ENCODE measurements at regions of chr7 and their contacts with region 1.

Region 1: DNA sequence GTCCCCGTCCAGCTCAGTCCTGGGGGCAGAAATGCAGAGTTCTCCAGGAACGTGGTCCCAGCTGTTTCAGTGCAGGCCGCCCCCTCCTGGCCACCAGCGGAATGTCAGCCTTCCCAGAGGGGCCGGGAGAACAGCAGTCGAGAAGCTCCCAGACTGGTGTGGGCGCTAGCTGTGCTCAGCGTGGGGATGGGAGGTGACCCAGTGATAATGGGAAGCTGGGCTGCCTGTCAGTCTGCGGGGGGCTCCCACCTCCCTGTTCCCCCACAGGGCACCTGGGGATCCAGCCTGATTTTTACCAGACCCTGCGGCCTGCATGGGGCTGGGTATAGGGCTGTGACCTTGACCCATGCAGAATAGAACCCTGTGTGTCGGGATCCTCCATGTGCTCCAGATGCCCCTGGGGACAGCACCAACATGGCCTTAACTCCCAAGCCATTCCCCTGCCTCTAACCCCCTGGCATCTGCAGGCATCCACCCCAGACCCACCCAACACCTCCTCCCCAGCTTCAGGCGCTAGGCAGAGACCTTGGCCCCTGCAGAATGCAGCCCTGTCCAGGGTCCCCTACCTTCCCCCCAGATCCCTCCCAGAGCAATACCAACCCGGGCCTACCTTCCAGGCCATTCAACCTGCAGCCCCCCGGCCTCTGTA is 946 bp upstream of the ELN start:
- DNase-seq: peak; percentile 77 to 88 (median 85)
- ATAC-seq: peak; percentile 93
- H3K4me3 ChIP-seq: no peak overlapping the region
- H3K27ac ChIP-seq: no peak overlapping the region
- H3K4me1 ChIP-seq: peaks cover 0 to 19% of the 10 kb centered on the region in 2 experiments; a peak in 1 of 5 replicates
- H3K27me3 ChIP-seq: peaks cover 62 to 80% of the 10 kb centered on the region in 2 experiments
- CTCF ChIP-seq: peak; percentile 91 to 97 (median 92)
- EP300 ChIP-seq: 0 out of 2 replicates have a peak, but pooled peaks have one; percentile 6
- POLR2A ChIP-seq: no peak
- RAD21 ChIP-seq: peak; percentile 63 to 79

Region 2: GRCh38 chr7:73799267-73800141 is 227.5 kb before region 1 on chr7:
- CTCF ChIA-PET with region 1: no interaction called
- POLR2A ChIA-PET with region 1: no interaction called
- in situ Hi-C with region 1: no loop called
- intact Hi-C with region 1: loop called (anchors 5 kb)
- DNase-seq: no peak
- ATAC-seq: peak; percentile 42; the same call in 2 of the 3 replicates
- H3K4me3 ChIP-seq: no peak overlapping the region
- H3K27ac ChIP-seq: no peak overlapping the region
- H3K4me1 ChIP-seq: peaks cover under 1 to 3% of the 10 kb centered on the region in 2 experiments; a peak in 4 of 5 replicates
- H3K27me3 ChIP-seq: no peaks in the 10 kb centered on the region
- CTCF ChIP-seq: no peak
- EP300 ChIP-seq: no peak
- POLR2A ChIP-seq: no peak
- RAD21 ChIP-seq: no peak

Region 3: GRCh38 chr7:73879977-73880681 is 146.9 kb before region 1 on chr7:
- CTCF ChIA-PET with region 1: no interaction called
- POLR2A ChIA-PET with region 1: no interaction called
- in situ Hi-C with region 1: loop called (anchors 5 kb)
- intact Hi-C with region 1: loop called (anchors 5 kb)
- DNase-seq: no peak
- ATAC-seq: peak; percentile 50
- H3K4me3 ChIP-seq: no peak overlapping the region
- H3K27ac ChIP-seq: no peak overlapping the region
- H3K4me1 ChIP-seq: peaks cover 0 to 9% of the 10 kb centered on the region in 2 experiments; a peak in 1 of 5 replicates
- H3K27me3 ChIP-seq: peaks cover 21 to 63% of the 10 kb centered on the region in 2 experiments
- CTCF ChIP-seq: no peak
- EP300 ChIP-seq: no peak
- POLR2A ChIP-seq: no peak
- RAD21 ChIP-seq: no peak

Region 4: GRCh38 chr7:73885975-73886798 is 140.8 kb before region 1 on chr7:
- CTCF ChIA-PET with region 1: no interaction called
- POLR2A ChIA-PET with region 1: no interaction called
- in situ Hi-C with region 1: loop called (anchors 5 kb)
- intact Hi-C with region 1: loop called (anchors 5 kb)
- DNase-seq: peak; percentile 92 to 97 (median 95)
- ATAC-seq: peak; percentile 96
- H3K4me3 ChIP-seq: no peak overlapping the region
- H3K27ac ChIP-seq: peak overlapping the region; percentile 32; the same call in 1 of the 3 replicates
- H3K4me1 ChIP-seq: peaks cover 12 to 29% of the 10 kb centered on the region in 2 experiments
- H3K27me3 ChIP-seq: peaks cover 0 to 36% of the 10 kb centered on the region in 2 experiments; a peak in 3 of 5 replicates
- CTCF ChIP-seq: no peak
- EP300 ChIP-seq: peak; percentile 100
- POLR2A ChIP-seq: no peak
- RAD21 ChIP-seq: peak in 1 of 2 experiments; percentile 46; a peak in 2 of 4 replicates

Region 5: GRCh38 chr7:73941836-73942551 is 85.0 kb before region 1 on chr7:
- CTCF ChIA-PET with region 1: no interaction called
- POLR2A ChIA-PET with region 1: no interaction called
- in situ Hi-C with region 1: no loop called
- intact Hi-C with region 1: no loop called
- DNase-seq: no peak
- ATAC-seq: no peak
- H3K4me3 ChIP-seq: no peak overlapping the region
- H3K27ac ChIP-seq: no peak overlapping the region
- H3K4me1 ChIP-seq: no peaks in the 10 kb centered on the region
- H3K27me3 ChIP-seq: no peaks in the 10 kb centered on the region
- CTCF ChIP-seq: no peak
- EP300 ChIP-seq: no peak
- POLR2A ChIP-seq: no peak
- RAD21 ChIP-seq: no peak